ENCODE measurements at regions of chrX and their contacts with region 1.

Region 1: GRCh38 chrX:136953867-136954787 is 73.6 kb upstream of the RBMX start:
- DNase-seq: no peak
- H3K4me3 ChIP-seq: no peak overlapping the region
- H3K27ac ChIP-seq: no peak overlapping the region
- H3K27me3 ChIP-seq: no peaks in the 10 kb centered on the region
- CTCF ChIP-seq: peak; percentile 63

Region 2: DNA sequence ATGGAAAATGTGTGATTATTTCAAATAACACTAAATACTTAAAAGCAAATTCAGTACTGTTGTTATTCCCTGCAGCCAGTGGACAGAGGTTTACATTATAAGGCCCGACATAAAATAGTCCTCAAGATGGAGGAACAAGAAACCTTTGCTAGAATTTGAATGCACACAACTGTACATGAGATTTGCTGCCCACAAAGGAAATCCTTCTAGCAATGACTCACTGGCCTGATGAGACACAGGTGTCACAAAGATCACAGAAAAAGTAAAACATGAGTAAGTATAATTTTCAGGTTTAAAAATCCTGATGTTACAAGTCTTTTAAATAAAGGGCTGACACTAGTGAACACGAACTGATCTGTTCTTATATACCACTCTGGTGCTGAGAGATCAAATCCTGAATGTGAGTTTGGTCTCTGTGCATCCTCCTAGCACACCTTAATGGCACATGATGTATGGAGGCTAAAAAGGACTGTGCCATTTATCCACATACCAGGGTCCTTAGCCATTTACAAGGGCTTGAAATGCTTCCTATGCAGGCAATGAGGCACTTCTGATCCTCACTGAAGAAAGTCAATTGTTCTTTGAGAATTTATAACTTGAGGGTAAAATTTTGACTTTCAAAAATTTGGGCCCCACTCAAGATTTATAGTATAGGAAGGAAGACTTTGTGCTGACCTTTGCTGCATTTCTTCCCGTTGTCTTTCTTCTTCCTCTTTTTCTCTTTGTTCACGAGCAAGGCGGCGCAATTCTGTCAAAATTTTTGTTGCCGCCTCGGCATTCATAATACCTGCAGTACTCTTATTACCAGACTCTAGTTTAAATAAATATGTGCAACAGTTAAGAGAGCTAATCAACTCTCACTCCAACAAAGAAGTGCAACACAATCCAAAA is 725.9 kb before region 1 on chrX:
- CTCF ChIA-PET with region 1: no interaction called
- POLR2A ChIA-PET with region 1: no interaction called
- DNase-seq: no peak
- H3K4me3 ChIP-seq: no peak overlapping the region
- H3K27ac ChIP-seq: no peak overlapping the region
- H3K27me3 ChIP-seq: no peaks in the 10 kb centered on the region
- CTCF ChIP-seq: no peak

Region 3: GRCh38 chrX:137051978-137052642 is 98.0 kb after region 1 on chrX:
- CTCF ChIA-PET with region 1: interaction called, 19 read pairs
- POLR2A ChIA-PET with region 1: no interaction called
- DNase-seq: no peak
- H3K4me3 ChIP-seq: peak overlapping the region; percentile 48
- H3K27ac ChIP-seq: no peak overlapping the region
- H3K27me3 ChIP-seq: no peaks in the 10 kb centered on the region
- CTCF ChIP-seq: peak; percentile 70

Region 4: GRCh38 chrX:137194164-137194563 is 240.0 kb after region 1 on chrX:
- CTCF ChIA-PET with region 1: interaction called, 13 read pairs
- POLR2A ChIA-PET with region 1: no interaction called
- DNase-seq: no peak
- H3K4me3 ChIP-seq: no peak overlapping the region
- H3K27ac ChIP-seq: no peak overlapping the region
- H3K27me3 ChIP-seq: no peaks in the 10 kb centered on the region
- CTCF ChIP-seq: peak; percentile 62